PC-3 (cell line): ENCODE measurements at regions of chr5 and their contacts with region 1.

Region 1: GRCh38 chr5:120055858-120056257 is 408.2 kb upstream of the PRR16 start:
- DNase-seq: peak; percentile 32
- ATAC-seq: peak; percentile 87
- H3K4me3 ChIP-seq: no peak overlapping the region
- H3K27ac ChIP-seq: no peak overlapping the region
- H3K4me1 ChIP-seq: no peaks in the 10 kb centered on the region
- H3K27me3 ChIP-seq: no peaks in the 10 kb centered on the region
- CTCF ChIP-seq: peak; percentile 51; the same call in 1 of the 2 replicates

Region 2: DNA sequence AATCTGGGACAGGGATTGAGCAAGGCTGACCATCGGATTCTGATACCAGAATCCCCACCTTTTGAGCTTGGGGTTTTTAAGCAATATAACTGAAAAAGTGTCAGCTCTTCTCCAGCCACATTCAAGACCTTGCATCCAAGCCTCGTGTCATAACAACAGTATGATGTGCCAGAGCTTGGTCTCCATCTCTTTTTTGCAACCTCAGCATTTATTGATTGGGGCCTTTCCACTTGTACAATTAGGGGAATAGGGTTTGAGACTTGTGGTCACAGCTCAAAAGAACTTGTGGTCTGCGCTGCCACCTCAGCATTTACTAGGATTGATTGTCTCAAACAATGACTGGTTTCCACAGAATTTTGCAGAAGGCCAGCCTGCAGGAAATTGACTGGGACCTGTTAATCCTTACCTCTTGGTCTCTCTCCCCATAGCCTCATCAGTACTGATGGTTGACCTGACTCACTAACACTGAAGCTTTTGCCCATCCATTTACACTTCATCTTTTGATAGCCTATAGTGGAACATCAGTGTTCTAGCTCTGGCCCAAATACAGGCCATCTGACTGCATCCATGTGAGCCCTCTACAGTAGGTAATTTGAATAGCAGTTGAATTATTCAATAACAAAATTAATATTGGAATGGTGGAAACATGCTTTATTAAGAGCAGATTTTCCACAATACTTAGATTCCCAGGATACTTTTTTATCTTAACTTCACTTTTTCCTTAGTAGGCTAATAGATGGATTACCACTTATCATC is 26.6 kb after region 1 on chr5:
- CTCF ChIA-PET with region 1: no interaction called
- POLR2A ChIA-PET with region 1: no interaction called
- intact Hi-C with region 1: no loop called
- DNase-seq: peak; percentile 10
- ATAC-seq: peak; percentile 37; the same call in 1 of the 2 replicates
- H3K4me3 ChIP-seq: no peak overlapping the region
- H3K27ac ChIP-seq: no peak overlapping the region
- H3K4me1 ChIP-seq: no peaks in the 10 kb centered on the region
- H3K27me3 ChIP-seq: no peaks in the 10 kb centered on the region
- CTCF ChIP-seq: peak; percentile 52

Region 3: GRCh38 chr5:120236360-120236759 is 180.5 kb after region 1 on chr5:
- CTCF ChIA-PET with region 1: no interaction called
- POLR2A ChIA-PET with region 1: no interaction called
- intact Hi-C with region 1: no loop called
- DNase-seq: no peak
- ATAC-seq: no peak
- H3K4me3 ChIP-seq: no peak overlapping the region
- H3K27ac ChIP-seq: no peak overlapping the region
- H3K4me1 ChIP-seq: peaks cover 7% of the 10 kb centered on the region; the same call in 1 of the 2 replicates
- H3K27me3 ChIP-seq: no peaks in the 10 kb centered on the region
- CTCF ChIP-seq: no peak

Region 4: GRCh38 chr5:120304663-120305062 is 248.8 kb after region 1 on chr5:
- CTCF ChIA-PET with region 1: no interaction called
- POLR2A ChIA-PET with region 1: no interaction called
- intact Hi-C with region 1: loop called (anchors 1 kb)
- DNase-seq: peak; percentile 71
- ATAC-seq: peak; percentile 94
- H3K4me3 ChIP-seq: no peak overlapping the region
- H3K27ac ChIP-seq: peak overlapping the region; percentile 82
- H3K4me1 ChIP-seq: peaks cover 29% of the 10 kb centered on the region
- H3K27me3 ChIP-seq: no peaks in the 10 kb centered on the region
- CTCF ChIP-seq: no peak

Region 5: GRCh38 chr5:120327180-120327579 is 271.3 kb after region 1 on chr5:
- CTCF ChIA-PET with region 1: no interaction called
- POLR2A ChIA-PET with region 1: no interaction called
- intact Hi-C with region 1: loop called (anchors 1 kb)
- DNase-seq: no peak
- ATAC-seq: no peak
- H3K4me3 ChIP-seq: no peak overlapping the region
- H3K27ac ChIP-seq: no peak overlapping the region
- H3K4me1 ChIP-seq: no peaks in the 10 kb centered on the region
- H3K27me3 ChIP-seq: no peaks in the 10 kb centered on the region
- CTCF ChIP-seq: peak; percentile 44